ENCODE measurements at regions of chr4 and their contacts with region 1.

Region 1: DNA sequence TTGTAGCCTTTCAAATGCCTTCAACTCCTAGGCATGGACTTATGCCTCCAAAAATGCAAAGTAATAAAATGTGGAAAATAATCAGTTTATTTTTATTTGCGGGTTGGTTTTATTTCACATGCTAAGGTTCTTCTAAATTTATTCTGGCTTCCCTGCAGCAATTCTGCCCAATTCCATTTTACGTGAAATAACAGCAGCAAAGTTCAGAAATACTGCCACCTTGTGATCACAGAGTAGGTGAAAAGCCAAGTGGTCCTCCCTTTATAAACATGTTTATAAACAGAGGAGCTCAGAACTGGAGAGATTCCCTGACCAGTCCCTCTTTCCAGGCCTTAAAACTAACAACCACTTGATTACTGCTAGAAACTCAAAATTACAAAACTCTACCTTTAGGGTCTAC is 14.7 kb upstream of the DCHS2 start:
- DNase-seq: peak; percentile 47
- H3K4me3 ChIP-seq: no peak overlapping the region
- H3K27ac ChIP-seq: no peak overlapping the region
- H3K4me1 ChIP-seq: no peaks in the 10 kb centered on the region
- H3K27me3 ChIP-seq: peaks cover 12% of the 10 kb centered on the region
- CTCF ChIP-seq: peak; percentile 61

Region 2: DNA sequence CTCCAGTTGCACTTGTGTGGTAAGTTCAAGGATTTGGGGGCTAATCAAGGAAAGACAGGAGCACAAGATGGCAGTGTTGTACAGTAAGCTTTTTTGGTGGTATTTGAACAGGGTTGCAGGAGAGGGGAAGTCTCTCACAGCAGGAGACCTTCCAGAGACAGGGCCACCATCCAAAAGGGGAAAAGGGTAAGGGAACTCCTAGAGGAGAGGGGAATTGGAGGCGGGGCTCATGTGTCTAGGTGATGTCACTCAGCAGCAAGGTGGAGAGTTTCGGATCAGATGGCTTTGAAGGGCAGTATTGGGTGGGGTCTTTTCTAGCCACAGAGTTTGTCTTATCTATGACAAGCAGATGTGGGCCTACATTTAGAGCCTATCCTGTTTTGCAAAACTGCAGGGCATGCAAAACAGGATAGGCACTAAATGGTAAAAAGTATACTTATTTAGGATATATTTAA is 733.0 kb before region 1 on chr4:
- CTCF ChIA-PET with region 1: no interaction called
- POLR2A ChIA-PET with region 1: no interaction called
- intact Hi-C with region 1: loop called (anchors 5 kb)
- DNase-seq: peak; percentile 45
- H3K4me3 ChIP-seq: no peak overlapping the region
- H3K27ac ChIP-seq: no peak overlapping the region
- H3K4me1 ChIP-seq: no peaks in the 10 kb centered on the region
- H3K27me3 ChIP-seq: no peaks in the 10 kb centered on the region
- CTCF ChIP-seq: peak; percentile 47

Region 3: DNA sequence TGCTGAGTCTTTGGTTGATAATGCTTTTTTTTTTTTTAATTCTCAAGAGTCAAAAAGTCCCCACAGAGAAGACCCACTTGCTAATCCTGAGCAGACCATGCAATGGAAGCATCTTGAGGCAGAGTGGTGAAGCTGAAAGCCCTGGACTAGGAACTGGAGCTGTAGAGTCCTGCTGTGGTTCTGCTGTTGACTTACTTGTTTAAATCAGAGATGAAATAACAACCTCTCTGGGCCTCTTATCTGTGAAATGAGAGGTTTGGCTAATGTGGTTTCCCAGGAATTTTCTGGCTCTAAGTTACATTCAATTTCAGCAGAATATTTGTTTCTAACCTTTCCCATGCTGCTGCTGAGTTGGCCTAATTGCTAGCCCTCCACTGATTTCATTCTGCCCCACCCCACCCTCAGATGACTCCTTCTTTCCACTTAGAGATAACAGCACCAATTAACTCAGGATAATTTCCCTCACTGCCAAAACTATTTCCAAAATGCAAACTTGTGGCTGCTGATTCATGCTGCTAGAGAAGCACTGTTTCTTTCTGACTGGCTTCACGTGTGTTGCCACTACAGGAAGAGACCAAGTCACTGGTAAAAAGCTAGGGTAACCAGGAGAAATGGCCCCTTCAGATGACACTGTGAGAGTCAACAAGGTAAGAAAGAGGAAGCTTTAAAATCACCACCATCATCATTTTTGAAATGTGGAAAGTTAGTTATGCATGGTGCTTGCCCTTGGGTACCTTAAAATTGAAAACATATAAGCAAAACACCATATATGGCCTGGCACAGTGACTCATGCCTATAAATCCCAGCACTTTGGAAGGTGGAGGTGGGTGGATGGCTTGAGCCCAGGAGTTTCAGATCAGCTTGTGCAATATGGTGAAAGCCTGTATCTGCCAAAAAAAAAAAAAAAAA is 341.1 kb before region 1 on chr4:
- CTCF ChIA-PET with region 1: no interaction called
- POLR2A ChIA-PET with region 1: no interaction called
- intact Hi-C with region 1: no loop called
- DNase-seq: no peak
- H3K4me3 ChIP-seq: no peak overlapping the region
- H3K27ac ChIP-seq: no peak overlapping the region
- H3K4me1 ChIP-seq: no peaks in the 10 kb centered on the region
- H3K27me3 ChIP-seq: no peaks in the 10 kb centered on the region
- CTCF ChIP-seq: no peak

Region 4: DNA sequence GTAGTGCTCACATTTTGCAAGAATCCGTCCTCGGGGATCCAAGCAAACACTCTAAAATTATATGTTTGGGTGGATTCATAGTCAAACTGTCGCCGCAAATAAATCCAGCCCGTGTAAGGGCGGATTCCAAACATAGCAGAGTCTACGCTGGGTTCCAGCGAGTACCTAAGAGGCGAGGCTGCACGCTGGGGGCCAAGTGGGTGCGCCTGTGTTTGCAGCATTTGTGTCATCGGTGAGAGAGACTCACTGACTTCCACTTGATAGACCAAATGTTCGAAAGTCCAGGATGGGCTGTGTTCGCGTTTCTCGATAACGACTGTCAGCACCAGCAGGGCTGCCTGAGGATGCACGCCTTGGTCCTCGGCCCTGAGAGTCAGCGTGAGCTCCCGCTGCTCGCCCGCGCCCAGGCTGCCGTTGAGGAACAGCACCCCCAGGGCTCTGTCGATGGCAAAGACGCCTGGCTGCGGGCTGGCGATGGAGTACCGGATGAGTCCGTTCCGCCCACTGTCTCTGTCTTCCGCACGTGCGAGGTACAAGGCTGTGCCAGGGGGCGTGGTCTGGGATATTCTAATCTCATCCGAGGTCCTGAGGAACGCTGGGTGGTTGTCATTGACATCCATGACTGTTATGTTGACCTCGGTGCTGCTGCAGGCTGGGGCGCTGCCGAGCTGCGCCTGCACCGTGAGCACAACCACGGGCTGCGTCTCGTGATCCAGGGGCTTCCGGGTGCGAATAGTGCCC is 173.4 kb before region 1 on chr4:
- CTCF ChIA-PET with region 1: no interaction called
- POLR2A ChIA-PET with region 1: no interaction called
- intact Hi-C with region 1: loop called (anchors 5 kb)
- DNase-seq: peak; percentile 38
- H3K4me3 ChIP-seq: peak overlapping the region; percentile 14
- H3K27ac ChIP-seq: no peak overlapping the region
- H3K4me1 ChIP-seq: no peaks in the 10 kb centered on the region
- H3K27me3 ChIP-seq: no peaks in the 10 kb centered on the region
- CTCF ChIP-seq: 0 out of 2 replicates have a peak, but pooled peaks have one; percentile 13

Region 5: DNA sequence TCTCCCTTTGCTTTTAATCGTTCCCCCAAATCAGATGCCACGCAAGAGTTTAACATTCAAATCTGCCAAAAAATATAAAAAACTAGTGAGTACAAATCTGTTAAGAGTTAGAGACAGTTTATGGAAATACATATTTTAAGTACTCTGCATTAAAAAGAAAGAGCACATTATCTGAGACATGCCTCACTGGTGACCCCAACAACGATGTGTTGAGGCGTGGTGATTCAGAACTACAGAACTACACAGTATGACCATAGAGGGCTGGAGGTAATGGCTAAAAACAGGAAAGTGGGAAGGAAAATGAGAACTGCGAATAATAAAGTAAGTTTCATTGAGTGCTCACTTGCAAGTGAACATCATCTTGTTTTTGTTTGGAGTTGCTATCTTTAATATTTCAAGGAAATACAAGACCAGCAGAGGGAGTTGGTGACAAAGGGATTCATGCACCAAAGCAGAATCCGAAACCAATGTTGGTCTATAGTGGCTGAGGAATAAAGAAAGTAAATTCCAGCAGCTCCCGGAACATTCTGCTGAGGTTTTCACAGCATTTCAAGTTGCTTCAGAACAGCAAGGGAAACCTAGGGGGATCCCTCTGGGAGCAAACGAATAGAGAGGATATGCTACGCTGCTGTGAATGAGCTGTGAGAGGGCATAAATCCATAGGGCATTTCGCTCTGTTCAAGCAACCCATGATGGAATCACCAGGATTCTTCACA is 106.8 kb before region 1 on chr4:
- CTCF ChIA-PET with region 1: interaction called, 7 read pairs
- POLR2A ChIA-PET with region 1: no interaction called
- intact Hi-C with region 1: loop called (anchors 1 kb)
- DNase-seq: peak; percentile 49
- H3K4me3 ChIP-seq: peak overlapping the region; percentile 10
- H3K27ac ChIP-seq: no peak overlapping the region
- H3K4me1 ChIP-seq: no peaks in the 10 kb centered on the region
- H3K27me3 ChIP-seq: no peaks in the 10 kb centered on the region
- CTCF ChIP-seq: peak; percentile 55

Measured in A673 (cell line).